ENCODE measurements at regions of chr4 and their contacts with region 1.

Region 1: GRCh38 chr4:101306225-101306624 is 41.1 kb downstream of the PPP3CA start:
- DNase-seq: peak; percentile 29
- H3K4me3 Mint-ChIP-seq: peak overlapping the region; percentile 68
- H3K27ac Mint-ChIP-seq: peak overlapping the region; percentile 94
- H3K4me1 Mint-ChIP-seq: peaks cover 19% of the 10 kb centered on the region
- H3K27me3 Mint-ChIP-seq: no peaks in the 10 kb centered on the region
- CTCF ChIP-seq: no peak

Region 2: GRCh38 chr4:101232074-101232776 is 74.0 kb before region 1 on chr4:
- CTCF ChIA-PET with region 1: interaction called, 4 read pairs
- POLR2A ChIA-PET with region 1: interaction called, 13 read pairs
- intact Hi-C with region 1: loop called (anchors 10 kb)
- DNase-seq: peak; percentile 83
- H3K4me3 Mint-ChIP-seq: no peak overlapping the region
- H3K27ac Mint-ChIP-seq: peak overlapping the region; percentile 60
- H3K4me1 Mint-ChIP-seq: peaks cover 37% of the 10 kb centered on the region
- H3K27me3 Mint-ChIP-seq: no peaks in the 10 kb centered on the region
- CTCF ChIP-seq: no peak

Region 3: DNA sequence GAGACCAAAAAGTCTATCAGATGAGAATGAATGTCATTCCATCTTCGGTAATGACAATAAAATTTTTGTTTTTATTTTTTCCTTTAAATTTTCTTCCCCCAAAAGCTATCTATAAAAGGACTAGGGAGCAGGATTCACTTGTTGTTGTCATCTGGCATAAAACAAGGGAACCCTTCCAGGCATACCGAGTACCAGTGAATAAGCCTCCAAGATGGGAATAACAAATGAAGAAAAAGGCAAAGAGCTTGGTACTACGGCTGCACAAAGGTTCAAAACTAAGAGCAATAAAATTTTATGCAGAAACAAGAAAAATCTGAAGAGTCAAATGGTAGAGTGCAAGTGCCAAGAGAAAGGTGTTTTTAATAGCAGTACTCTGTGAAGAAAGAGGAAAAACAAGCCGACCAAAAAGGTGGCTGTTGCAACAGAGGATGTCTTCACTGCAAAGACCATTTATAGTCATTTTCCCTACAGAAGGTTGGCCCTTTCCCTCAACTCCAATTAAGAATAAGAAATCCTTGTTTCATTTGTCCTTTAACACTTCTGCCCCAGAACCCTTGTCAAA is 15.3 kb after region 1 on chr4:
- CTCF ChIA-PET with region 1: interaction called, 5 read pairs
- POLR2A ChIA-PET with region 1: interaction called, 15 read pairs
- intact Hi-C with region 1: no loop called
- DNase-seq: peak; percentile 44
- H3K4me3 Mint-ChIP-seq: no peak overlapping the region
- H3K27ac Mint-ChIP-seq: peak overlapping the region; percentile 37
- H3K4me1 Mint-ChIP-seq: peaks cover 21% of the 10 kb centered on the region
- H3K27me3 Mint-ChIP-seq: no peaks in the 10 kb centered on the region
- CTCF ChIP-seq: no peak

Measured in MCF 10A (cell line).